Caco-2 (cell line): ENCODE measurements at regions of chr7 and their contacts with region 1.

Region 1: GRCh38 chr7:36967387-36967786 is 243.1 kb upstream of the AOAH start:
- DNase-seq: peak; percentile 68 to 72
- H3K4me3 ChIP-seq: no peak overlapping the region
- H3K4me3 Mint-ChIP-seq: no peak overlapping the region
- H3K27ac Mint-ChIP-seq: no peak overlapping the region
- H3K4me1 ChIP-seq: peaks cover 23% of the 10 kb centered on the region
- H3K4me1 Mint-ChIP-seq: peaks cover 35% of the 10 kb centered on the region
- H3K27me3 ChIP-seq: no peaks in the 10 kb centered on the region
- H3K27me3 Mint-ChIP-seq: no peaks in the 10 kb centered on the region
- CTCF ChIP-seq: peak; percentile 63 to 70

Region 2: DNA sequence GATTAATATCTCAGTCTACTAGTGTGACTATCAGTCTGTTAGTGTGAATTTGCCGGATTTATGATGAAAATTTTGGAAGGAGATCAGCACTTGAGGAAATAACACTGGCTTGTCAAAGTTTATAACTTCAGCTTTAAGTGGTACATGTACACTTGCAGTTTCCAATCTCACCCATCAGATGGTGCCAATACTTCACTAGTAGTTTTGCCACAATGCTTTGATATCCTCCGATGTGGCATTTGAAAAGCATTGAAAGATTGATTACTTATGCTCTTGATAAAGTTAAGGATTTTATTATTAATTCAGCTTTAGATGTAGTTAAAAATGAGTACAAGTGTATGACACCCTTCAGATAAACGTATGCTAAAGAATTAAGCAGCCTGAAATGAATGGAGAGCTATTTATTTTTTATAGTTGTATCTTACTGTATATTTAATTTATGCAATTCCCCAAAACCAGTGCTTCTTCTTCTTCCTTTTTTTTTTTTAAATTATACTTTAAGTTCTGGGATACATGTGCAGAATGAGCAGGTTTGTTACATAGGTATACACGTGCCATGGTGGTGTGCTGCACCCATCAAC is 479.5 kb before region 1 on chr7:
- CTCF ChIA-PET with region 1: interaction called, 5 read pairs
- POLR2A ChIA-PET with region 1: no interaction called
- intact Hi-C with region 1: loop called (anchors 5 kb)
- DNase-seq: peak in 1 of 2 experiments; percentile 55
- H3K4me3 ChIP-seq: no peak overlapping the region
- H3K4me3 Mint-ChIP-seq: no peak overlapping the region
- H3K27ac Mint-ChIP-seq: no peak overlapping the region
- H3K4me1 ChIP-seq: peaks cover 12% of the 10 kb centered on the region; the same call in 1 of the 2 replicates
- H3K4me1 Mint-ChIP-seq: no peaks in the 10 kb centered on the region
- H3K27me3 ChIP-seq: no peaks in the 10 kb centered on the region
- H3K27me3 Mint-ChIP-seq: no peaks in the 10 kb centered on the region
- CTCF ChIP-seq: peak; percentile 74 to 78

Region 3: GRCh38 chr7:36945612-36946400 is 21.6 kb before region 1 on chr7:
- CTCF ChIA-PET with region 1: no interaction called
- POLR2A ChIA-PET with region 1: no interaction called
- intact Hi-C with region 1: loop called (anchors 1 kb)
- DNase-seq: peak; percentile 48 to 57
- H3K4me3 ChIP-seq: no peak overlapping the region
- H3K4me3 Mint-ChIP-seq: no peak overlapping the region
- H3K27ac Mint-ChIP-seq: no peak overlapping the region
- H3K4me1 ChIP-seq: peaks cover 44% of the 10 kb centered on the region
- H3K4me1 Mint-ChIP-seq: peaks cover 26% of the 10 kb centered on the region
- H3K27me3 ChIP-seq: no peaks in the 10 kb centered on the region
- H3K27me3 Mint-ChIP-seq: no peaks in the 10 kb centered on the region
- CTCF ChIP-seq: no peak

Region 4: GRCh38 chr7:37031571-37032257 is 64.3 kb after region 1 on chr7:
- CTCF ChIA-PET with region 1: interaction called, 3 read pairs
- POLR2A ChIA-PET with region 1: no interaction called
- intact Hi-C with region 1: loop called (anchors 1 kb)
- DNase-seq: peak; percentile 83 to 86
- H3K4me3 ChIP-seq: no peak overlapping the region
- H3K4me3 Mint-ChIP-seq: peak overlapping the region; percentile 27
- H3K27ac Mint-ChIP-seq: peak overlapping the region; percentile 87
- H3K4me1 ChIP-seq: peaks cover 23% of the 10 kb centered on the region
- H3K4me1 Mint-ChIP-seq: peaks cover 24% of the 10 kb centered on the region
- H3K27me3 ChIP-seq: no peaks in the 10 kb centered on the region
- H3K27me3 Mint-ChIP-seq: no peaks in the 10 kb centered on the region
- CTCF ChIP-seq: no peak

Region 5: DNA sequence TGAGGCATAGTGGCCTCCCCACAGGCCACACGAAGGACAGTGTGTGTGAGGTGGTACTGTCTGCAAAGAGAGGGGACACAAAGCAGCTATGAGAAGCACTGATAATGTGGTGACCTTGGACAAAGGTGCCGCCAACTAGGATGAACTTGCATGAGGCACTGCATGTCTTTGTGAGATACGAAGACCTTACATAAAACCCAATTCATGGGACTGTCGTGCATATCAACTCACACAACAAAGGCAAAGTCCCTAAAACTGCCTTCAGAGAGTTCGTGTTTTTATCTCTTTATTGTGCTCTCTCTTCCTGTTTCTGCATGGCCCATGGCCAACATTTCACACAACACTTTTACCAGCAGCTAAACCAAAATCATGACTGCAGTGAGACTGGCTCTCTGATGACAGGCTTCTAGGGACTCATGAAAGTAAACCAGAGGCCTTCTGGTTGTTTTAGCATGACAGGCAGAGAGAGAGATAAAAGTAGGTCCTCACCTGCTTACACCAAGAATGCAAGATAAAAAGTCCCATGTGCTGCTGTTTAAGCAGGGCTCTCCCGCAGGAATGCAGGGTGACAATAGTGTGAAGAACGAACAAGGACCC is 133.4 kb after region 1 on chr7:
- CTCF ChIA-PET with region 1: no interaction called
- POLR2A ChIA-PET with region 1: no interaction called
- intact Hi-C with region 1: loop called (anchors 2 kb)
- DNase-seq: peak; percentile 53 to 66
- H3K4me3 ChIP-seq: no peak overlapping the region
- H3K4me3 Mint-ChIP-seq: peak overlapping the region; percentile 20
- H3K27ac Mint-ChIP-seq: peak overlapping the region; percentile 63
- H3K4me1 ChIP-seq: peaks cover 32% of the 10 kb centered on the region
- H3K4me1 Mint-ChIP-seq: peaks cover 17% of the 10 kb centered on the region
- H3K27me3 ChIP-seq: no peaks in the 10 kb centered on the region
- H3K27me3 Mint-ChIP-seq: no peaks in the 10 kb centered on the region
- CTCF ChIP-seq: no peak

Region 6: DNA sequence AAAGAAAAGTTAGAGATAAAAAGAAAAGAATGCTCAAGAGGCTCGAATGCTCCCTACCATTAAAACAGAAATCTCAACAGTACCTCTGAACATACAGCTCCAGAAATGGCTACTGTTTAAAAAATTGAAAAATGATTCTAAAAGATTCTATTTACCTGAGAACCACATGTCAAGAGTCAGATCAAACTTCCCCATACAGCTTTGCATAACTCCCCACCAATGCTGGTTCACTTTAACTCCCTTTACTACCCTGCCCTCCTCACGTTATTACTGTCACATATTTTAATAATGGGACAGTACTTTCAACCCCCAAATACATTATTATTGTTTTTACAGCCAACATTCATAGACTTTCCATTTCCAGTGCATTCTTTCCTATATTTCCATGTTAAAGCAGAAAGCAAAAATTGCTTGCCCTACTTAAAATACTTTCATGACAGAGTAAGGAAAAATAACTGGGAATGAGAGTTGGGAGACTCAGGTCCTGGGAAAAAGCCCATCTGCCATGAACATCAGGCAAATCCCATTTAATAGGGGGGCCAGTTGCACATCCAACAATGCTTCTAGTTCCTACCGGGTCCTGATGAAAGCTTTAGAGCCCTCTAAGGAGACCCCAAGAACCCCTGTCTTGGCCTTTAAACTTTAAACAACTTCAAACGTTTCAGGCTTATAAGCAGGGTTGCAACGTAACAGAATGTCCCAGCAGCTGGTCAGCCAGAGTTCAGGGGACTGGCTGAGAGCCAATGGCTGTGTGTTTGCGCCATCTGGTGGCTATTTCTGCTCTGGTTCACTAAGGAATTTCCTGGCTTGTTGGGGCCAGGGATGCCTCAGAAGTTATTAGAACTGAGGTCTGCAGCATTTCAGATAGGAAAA is 233.9 kb after region 1 on chr7:
- CTCF ChIA-PET with region 1: interaction called, 9 read pairs
- POLR2A ChIA-PET with region 1: no interaction called
- intact Hi-C with region 1: loop called (anchors 1 kb)
- DNase-seq: peak; percentile 80 to 84
- H3K4me3 ChIP-seq: no peak overlapping the region
- H3K4me3 Mint-ChIP-seq: no peak overlapping the region
- H3K27ac Mint-ChIP-seq: no peak overlapping the region
- H3K4me1 ChIP-seq: no peaks in the 10 kb centered on the region; the same call in 1 of the 2 replicates
- H3K4me1 Mint-ChIP-seq: no peaks in the 10 kb centered on the region
- H3K27me3 ChIP-seq: no peaks in the 10 kb centered on the region
- H3K27me3 Mint-ChIP-seq: no peaks in the 10 kb centered on the region
- CTCF ChIP-seq: peak; percentile 79 to 85